ENCODE measurements at regions of chr22 and their contacts with region 1.

Region 1: DNA sequence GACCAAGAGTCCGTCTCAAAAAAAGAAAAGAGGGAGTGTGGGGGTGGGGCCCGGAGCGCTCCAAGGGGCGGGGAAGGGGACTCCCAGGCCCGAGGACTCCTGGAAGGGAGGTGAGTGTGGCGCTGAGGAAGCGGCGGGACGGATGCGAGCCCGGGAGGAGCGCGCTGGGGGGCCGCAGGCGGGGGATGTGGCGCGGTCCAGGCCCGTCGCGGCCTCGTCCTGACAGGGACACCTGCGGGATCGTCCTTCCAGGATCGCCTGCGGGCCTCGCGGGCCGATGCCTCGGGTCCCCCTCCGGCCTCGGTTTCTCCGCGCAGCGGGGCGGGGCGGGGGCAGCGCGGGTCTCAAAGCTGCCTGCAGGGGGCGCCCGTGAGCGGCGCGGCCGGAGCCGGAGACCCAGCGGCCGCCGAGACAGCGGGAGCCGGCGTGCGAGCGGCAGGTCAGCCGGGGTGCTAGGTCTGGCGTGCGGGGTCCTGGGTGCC is 3.8 kb upstream of the ADORA2A start:
- DNase-seq: peak in 13 of 14 experiments; percentile 44 to 83 (median 54)
- ATAC-seq: no peak
- H3K4me3 ChIP-seq: no peak overlapping the region
- H3K4me3 Mint-ChIP-seq: peak overlapping the region; percentile 74
- H3K27ac ChIP-seq: no peak overlapping the region
- H3K27ac Mint-ChIP-seq: peak overlapping the region; percentile 72
- H3K4me1 ChIP-seq: peaks cover 49% of the 10 kb centered on the region
- H3K4me1 Mint-ChIP-seq: peaks cover 44% of the 10 kb centered on the region
- H3K27me3 ChIP-seq: no peaks in the 10 kb centered on the region
- H3K27me3 Mint-ChIP-seq: no peaks in the 10 kb centered on the region
- CTCF ChIP-seq: peak; percentile 78

Region 2: GRCh38 chr22:22928666-22929380 is 1494.7 kb before region 1 on chr22:
- CTCF ChIA-PET with region 1: no interaction called
- POLR2A ChIA-PET with region 1: no interaction called
- intact Hi-C with region 1: no loop called
- DNase-seq: peak in 13 of 14 experiments; percentile 4 to 86 (median 19)
- ATAC-seq: peak; percentile 84
- H3K4me3 ChIP-seq: no peak overlapping the region
- H3K4me3 Mint-ChIP-seq: no peak overlapping the region
- H3K27ac ChIP-seq: peak overlapping the region in 1 of 2 donors; percentile 22
- H3K27ac Mint-ChIP-seq: no peak overlapping the region
- H3K4me1 ChIP-seq: peaks cover 45% of the 10 kb centered on the region
- H3K4me1 Mint-ChIP-seq: peaks cover 10% of the 10 kb centered on the region
- H3K27me3 ChIP-seq: no peaks in the 10 kb centered on the region
- H3K27me3 Mint-ChIP-seq: no peaks in the 10 kb centered on the region
- CTCF ChIP-seq: no peak

Region 3: GRCh38 chr22:24325105-24325757 is 98.3 kb before region 1 on chr22:
- CTCF ChIA-PET with region 1: no interaction called
- POLR2A ChIA-PET with region 1: no interaction called
- intact Hi-C with region 1: loop called in 1 of 2 experiments (anchors 5 kb)
- DNase-seq: peak in 4 of 14 experiments; percentile 13 to 73 (median 71)
- ATAC-seq: peak; percentile 75
- H3K4me3 ChIP-seq: no peak overlapping the region
- H3K4me3 Mint-ChIP-seq: no peak overlapping the region
- H3K27ac ChIP-seq: no peak overlapping the region
- H3K27ac Mint-ChIP-seq: no peak overlapping the region
- H3K4me1 ChIP-seq: peaks cover 4% of the 10 kb centered on the region
- H3K4me1 Mint-ChIP-seq: peaks cover 35% of the 10 kb centered on the region
- H3K27me3 ChIP-seq: no peaks in the 10 kb centered on the region
- H3K27me3 Mint-ChIP-seq: no peaks in the 10 kb centered on the region
- CTCF ChIP-seq: peak; percentile 80

Region 4: DNA sequence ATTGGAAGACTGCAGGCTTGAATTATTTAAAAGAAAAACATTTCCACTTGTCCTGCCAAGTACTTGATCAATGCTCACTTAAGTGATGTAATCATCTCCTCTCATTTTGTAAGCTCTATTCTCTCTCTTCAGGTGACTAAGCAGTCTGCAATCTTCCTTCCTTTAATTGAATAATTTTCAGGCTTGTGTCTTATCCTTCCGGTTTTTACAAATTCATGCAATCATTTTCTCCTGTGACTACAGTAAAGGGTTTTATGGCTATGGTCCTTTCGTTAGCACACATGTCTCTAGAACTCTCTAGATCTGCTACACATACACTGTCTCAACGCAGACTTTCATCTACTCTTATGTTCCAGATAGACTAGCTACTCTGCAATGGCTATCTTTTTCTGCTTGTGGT is 59.0 kb after region 1 on chr22:
- CTCF ChIA-PET with region 1: interaction called, 14 read pairs
- POLR2A ChIA-PET with region 1: interaction called, 6 read pairs
- intact Hi-C with region 1: loop called (anchors 2 to 5 kb)
- DNase-seq: peak in 2 of 14 experiments; percentile 27 to 42
- ATAC-seq: no peak
- H3K4me3 ChIP-seq: no peak overlapping the region
- H3K4me3 Mint-ChIP-seq: no peak overlapping the region
- H3K27ac ChIP-seq: no peak overlapping the region
- H3K27ac Mint-ChIP-seq: no peak overlapping the region
- H3K4me1 ChIP-seq: no peaks in the 10 kb centered on the region
- H3K4me1 Mint-ChIP-seq: no peaks in the 10 kb centered on the region
- H3K27me3 ChIP-seq: no peaks in the 10 kb centered on the region
- H3K27me3 Mint-ChIP-seq: no peaks in the 10 kb centered on the region
- CTCF ChIP-seq: no peak

Region 5: GRCh38 chr22:24525416-24526037 is 102.0 kb after region 1 on chr22:
- CTCF ChIA-PET with region 1: interaction called, 5 read pairs
- POLR2A ChIA-PET with region 1: no interaction called
- intact Hi-C with region 1: loop called (anchors 1 kb)
- DNase-seq: peak; percentile 60 to 88 (median 72)
- ATAC-seq: peak; percentile 98
- H3K4me3 ChIP-seq: no peak overlapping the region
- H3K4me3 Mint-ChIP-seq: no peak overlapping the region
- H3K27ac ChIP-seq: no peak overlapping the region
- H3K27ac Mint-ChIP-seq: no peak overlapping the region
- H3K4me1 ChIP-seq: peaks cover 13% of the 10 kb centered on the region
- H3K4me1 Mint-ChIP-seq: peaks cover 6% of the 10 kb centered on the region
- H3K27me3 ChIP-seq: no peaks in the 10 kb centered on the region
- H3K27me3 Mint-ChIP-seq: no peaks in the 10 kb centered on the region
- CTCF ChIP-seq: peak; percentile 70

Region 6: DNA sequence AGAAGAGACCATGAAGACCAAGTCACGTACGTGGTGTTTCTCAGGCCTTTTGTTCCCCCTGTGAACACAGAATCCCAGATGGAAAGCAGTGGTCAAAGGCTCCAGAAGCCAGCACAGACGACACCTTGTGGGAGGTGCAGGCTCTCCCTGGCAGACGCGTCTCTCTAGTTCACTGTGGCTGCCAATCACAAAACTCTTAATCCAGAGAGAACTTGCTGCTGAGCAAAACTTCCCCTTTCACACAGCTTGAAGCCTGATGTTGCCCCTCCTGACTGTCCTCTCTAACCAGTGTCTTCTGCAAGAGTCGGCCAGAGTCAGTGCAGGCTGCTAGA is 283.9 kb after region 1 on chr22:
- CTCF ChIA-PET with region 1: no interaction called
- POLR2A ChIA-PET with region 1: no interaction called
- intact Hi-C with region 1: no loop called
- DNase-seq: no peak
- ATAC-seq: no peak
- H3K4me3 ChIP-seq: no peak overlapping the region
- H3K4me3 Mint-ChIP-seq: no peak overlapping the region
- H3K27ac ChIP-seq: no peak overlapping the region
- H3K27ac Mint-ChIP-seq: no peak overlapping the region
- H3K4me1 ChIP-seq: no peaks in the 10 kb centered on the region
- H3K4me1 Mint-ChIP-seq: no peaks in the 10 kb centered on the region
- H3K27me3 ChIP-seq: peaks cover 5 to 6% of the 10 kb centered on the region in 2 experiments
- H3K27me3 Mint-ChIP-seq: peaks cover 17% of the 10 kb centered on the region
- CTCF ChIP-seq: no peak

Region 7: GRCh38 chr22:24758164-24758799 is 334.7 kb after region 1 on chr22:
- CTCF ChIA-PET with region 1: no interaction called
- POLR2A ChIA-PET with region 1: no interaction called
- intact Hi-C with region 1: loop called in 1 of 2 experiments (anchors 10 kb)
- DNase-seq: peak; percentile 22 to 76 (median 46)
- ATAC-seq: no peak
- H3K4me3 ChIP-seq: no peak overlapping the region
- H3K4me3 Mint-ChIP-seq: no peak overlapping the region
- H3K27ac ChIP-seq: no peak overlapping the region
- H3K27ac Mint-ChIP-seq: no peak overlapping the region
- H3K4me1 ChIP-seq: no peaks in the 10 kb centered on the region
- H3K4me1 Mint-ChIP-seq: no peaks in the 10 kb centered on the region
- H3K27me3 ChIP-seq: peaks cover 0 to 3% of the 10 kb centered on the region in 2 experiments
- H3K27me3 Mint-ChIP-seq: peaks cover 6% of the 10 kb centered on the region
- CTCF ChIP-seq: peak; percentile 96

Measured in CD4-positive, alpha-beta T cell (primary cell).